Cardiac septum (tissue), 1 donor: ENCODE measurements at regions of chr7 and their contacts with region 1.

Region 1: DNA sequence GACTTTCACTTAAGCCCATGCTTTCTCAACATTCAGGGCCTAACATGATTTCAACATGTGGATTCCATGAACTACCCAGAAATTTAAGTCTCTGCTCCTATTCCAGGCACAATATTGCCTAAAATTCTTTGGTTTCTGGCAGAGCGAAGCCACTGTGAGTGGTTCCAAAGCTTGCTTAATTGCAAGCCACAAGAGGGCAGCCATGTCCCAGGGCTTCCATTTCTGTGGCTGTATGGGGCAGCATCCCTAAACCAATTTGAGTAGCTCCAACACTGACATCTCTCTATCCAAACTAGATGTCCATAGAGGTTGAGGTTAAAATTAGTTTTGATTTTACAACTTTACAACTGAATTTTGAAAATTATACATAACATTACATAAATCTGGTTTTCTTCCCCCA is 56.3 kb upstream of the MDFIC start:
- DNase-seq: no peak

Region 2: GRCh38 chr7:115211171-115211570 is 345.6 kb after region 1 on chr7:
- intact Hi-C with region 1: loop called (anchors 5 kb)
- DNase-seq: no peak

Region 3: DNA sequence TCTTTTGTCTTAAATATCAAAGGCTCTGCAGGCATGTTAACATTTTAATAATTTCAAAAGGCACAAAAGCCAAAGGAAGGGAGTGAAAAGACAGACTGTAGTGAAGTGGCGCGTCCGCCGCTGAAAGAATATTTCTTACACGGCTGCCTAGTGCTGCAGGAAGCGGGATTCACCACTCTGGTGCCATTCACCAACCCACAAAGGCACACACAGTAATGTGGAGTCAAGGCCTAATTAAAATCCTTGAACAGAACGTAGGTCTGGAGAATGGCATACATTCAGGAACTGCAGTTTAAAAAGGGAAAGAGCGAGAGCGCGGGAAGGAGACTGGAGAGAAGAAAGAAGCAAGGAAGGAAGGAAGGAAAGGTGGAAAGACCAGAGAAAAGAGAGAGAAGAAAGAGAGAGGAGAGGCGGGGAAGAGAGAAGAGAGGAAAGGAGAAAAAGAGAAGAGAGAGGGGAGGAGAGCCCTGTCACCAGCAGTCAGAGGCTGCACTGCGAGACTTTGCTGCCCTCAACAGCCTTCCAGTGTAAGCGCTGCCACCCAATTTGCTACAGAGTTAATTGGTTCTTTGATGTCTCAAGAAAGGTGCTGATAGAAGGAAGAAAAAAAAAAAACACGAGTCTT is 610.3 kb after region 1 on chr7:
- intact Hi-C with region 1: loop called (anchors 1 kb)
- DNase-seq: no peak